ENCODE measurements at regions of chr1 and their contacts with region 1.

Region 1: GRCh38 chr1:25037174-25038074 is 107.3 kb upstream of the RUNX3 start:
- DNase-seq: no peak
- ATAC-seq: peak; percentile 33
- H3K4me3 ChIP-seq: no peak overlapping the region
- H3K27ac ChIP-seq: peak overlapping the region; percentile 69
- H3K4me1 ChIP-seq: peaks cover 51% of the 10 kb centered on the region
- H3K27me3 ChIP-seq: no peaks in the 10 kb centered on the region
- CTCF ChIP-seq: peak; percentile 67 to 90 (median 79)
- EP300 ChIP-seq: no peak
- POLR2A ChIP-seq: no peak
- RAD21 ChIP-seq: peak; percentile 74

Region 2: GRCh38 chr1:24606298-24607240 is 430.9 kb before region 1 on chr1:
- CTCF ChIA-PET with region 1: no interaction called
- POLR2A ChIA-PET with region 1: no interaction called
- RAD21 ChIA-PET with region 1: no interaction called
- SMC1A ChIA-PET with region 1: no interaction called
- in situ Hi-C with region 1: no loop called
- intact Hi-C with region 1: no loop called
- DNase-seq: no peak
- ATAC-seq: no peak
- H3K4me3 ChIP-seq: no peak overlapping the region
- H3K27ac ChIP-seq: no peak overlapping the region
- H3K4me1 ChIP-seq: no peaks in the 10 kb centered on the region
- H3K27me3 ChIP-seq: peaks cover 0 to 6% of the 10 kb centered on the region in 2 experiments; a peak in 2 of 4 replicates
- CTCF ChIP-seq: no peak
- EP300 ChIP-seq: no peak
- POLR2A ChIP-seq: no peak
- RAD21 ChIP-seq: no peak

Region 3: GRCh38 chr1:24619376-24619775 is 418.0 kb before region 1 on chr1:
- CTCF ChIA-PET with region 1: no interaction called
- POLR2A ChIA-PET with region 1: no interaction called
- RAD21 ChIA-PET with region 1: no interaction called
- SMC1A ChIA-PET with region 1: no interaction called
- in situ Hi-C with region 1: no loop called
- intact Hi-C with region 1: no loop called
- DNase-seq: no peak
- ATAC-seq: no peak
- H3K4me3 ChIP-seq: no peak overlapping the region
- H3K27ac ChIP-seq: no peak overlapping the region
- H3K4me1 ChIP-seq: no peaks in the 10 kb centered on the region
- H3K27me3 ChIP-seq: peaks cover 1 to 7% of the 10 kb centered on the region in 2 experiments; a peak in 2 of 4 replicates
- CTCF ChIP-seq: no peak
- EP300 ChIP-seq: no peak
- POLR2A ChIP-seq: no peak
- RAD21 ChIP-seq: no peak

Region 4: DNA sequence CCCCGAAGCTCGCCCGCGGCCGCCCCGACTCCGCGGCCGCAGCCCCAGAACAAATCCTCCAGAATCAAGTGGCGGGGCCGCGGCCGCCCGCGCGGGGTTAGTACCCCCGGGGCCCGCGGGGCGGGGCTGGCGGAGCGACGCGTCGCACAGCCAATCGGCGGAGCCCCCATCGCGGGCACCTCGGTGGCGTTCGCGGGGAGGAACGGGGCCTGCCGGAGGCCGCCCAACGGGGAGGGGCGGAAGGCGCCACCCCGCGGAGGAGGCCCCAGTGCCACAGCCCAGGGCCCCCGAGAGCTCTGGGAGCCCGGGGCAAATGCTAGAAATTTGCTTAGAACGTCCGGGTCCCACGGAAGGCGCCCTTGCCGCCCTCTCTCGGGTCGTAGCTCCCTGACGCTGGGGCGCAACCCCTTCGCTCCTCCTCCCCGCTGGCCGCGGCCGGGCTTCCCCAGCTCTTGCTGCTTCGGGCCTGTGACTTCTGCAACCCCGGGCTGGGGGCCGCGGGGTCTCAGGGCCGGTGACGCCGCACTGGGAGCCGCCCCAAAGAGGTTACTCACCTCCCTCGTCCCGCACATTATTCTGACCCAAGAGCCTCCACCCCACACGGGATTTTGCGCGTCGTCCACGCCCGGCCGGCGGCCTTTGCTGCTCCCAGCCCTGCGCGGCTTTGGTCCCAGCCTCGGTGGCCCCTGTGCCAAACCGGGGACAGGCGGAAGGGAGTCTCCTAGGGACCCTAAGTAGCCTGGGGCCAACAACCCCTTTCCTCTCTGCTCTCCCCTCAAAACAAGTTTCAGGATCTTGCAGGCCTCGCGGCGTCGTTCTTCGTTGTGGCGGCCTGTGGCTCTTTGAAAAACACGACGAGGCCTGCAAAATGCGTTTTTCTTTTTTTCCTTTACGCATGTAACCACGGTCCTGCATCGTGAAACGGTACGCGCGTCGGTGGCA is 106.9 kb before region 1 on chr1 and contains the start of gene RUNX3:
- CTCF ChIA-PET with region 1: interaction called, 128 read pairs
- POLR2A ChIA-PET with region 1: interaction called, 75 read pairs
- RAD21 ChIA-PET with region 1: interaction called, 150 read pairs
- SMC1A ChIA-PET with region 1: interaction called, 239 read pairs
- in situ Hi-C with region 1: no loop called
- intact Hi-C with region 1: loop called (anchors 1 kb)
- DNase-seq: peak; percentile 76
- ATAC-seq: peak; percentile 77
- H3K4me3 ChIP-seq: peak within 1 kb of the TSS; percentile 99
- H3K27ac ChIP-seq: peak within 1 kb of the TSS; percentile 89
- H3K4me1 ChIP-seq: peaks cover 40% of the 10 kb centered on the region
- H3K27me3 ChIP-seq: no peaks in the 10 kb centered on the region
- CTCF ChIP-seq: peak; percentile 14 to 45 (median 35); a peak in 3 of 6 replicates
- EP300 ChIP-seq: peak in 1 of 2 experiments; percentile 39; a peak in 1 of 4 replicates
- POLR2A ChIP-seq: peak; percentile 11; the same call in 1 of the 2 replicates
- RAD21 ChIP-seq: no peak
- polyA plus RNA-seq, gene RUNX3: 21.6 to 26.3 TPM

Region 5: DNA sequence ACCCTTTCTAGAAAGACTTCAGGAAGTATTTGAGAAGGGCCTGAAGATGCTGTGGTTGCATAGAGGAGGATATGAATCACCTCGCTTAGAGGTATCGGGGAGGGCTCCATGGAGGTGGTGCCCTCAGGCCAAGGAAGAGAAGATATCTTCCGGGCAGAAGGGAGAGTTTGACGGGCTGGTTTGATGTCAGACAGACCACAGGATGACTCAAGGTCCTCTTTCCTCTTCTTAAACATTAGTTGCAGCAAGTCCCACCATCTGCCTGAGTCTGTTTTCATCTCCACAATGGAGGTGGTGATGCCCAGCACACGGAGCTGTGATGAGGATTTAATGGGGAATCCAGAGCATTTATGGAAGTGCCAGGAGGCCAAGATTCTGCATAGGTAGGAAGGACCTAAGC is 82.3 kb before region 1 on chr1:
- CTCF ChIA-PET with region 1: interaction called, 396 read pairs
- POLR2A ChIA-PET with region 1: interaction called, 169 read pairs
- RAD21 ChIA-PET with region 1: interaction called, 214 read pairs
- SMC1A ChIA-PET with region 1: interaction called, 292 read pairs
- in situ Hi-C with region 1: loop called (anchors 5 kb)
- intact Hi-C with region 1: no loop called
- DNase-seq: no peak
- ATAC-seq: peak; percentile 57
- H3K4me3 ChIP-seq: peak overlapping the region; percentile 52
- H3K27ac ChIP-seq: peak overlapping the region; percentile 76
- H3K4me1 ChIP-seq: peaks cover 92% of the 10 kb centered on the region
- H3K27me3 ChIP-seq: no peaks in the 10 kb centered on the region
- CTCF ChIP-seq: no peak
- EP300 ChIP-seq: no peak
- POLR2A ChIP-seq: no peak; the same call in 1 of the 2 replicates
- RAD21 ChIP-seq: no peak

Region 6: DNA sequence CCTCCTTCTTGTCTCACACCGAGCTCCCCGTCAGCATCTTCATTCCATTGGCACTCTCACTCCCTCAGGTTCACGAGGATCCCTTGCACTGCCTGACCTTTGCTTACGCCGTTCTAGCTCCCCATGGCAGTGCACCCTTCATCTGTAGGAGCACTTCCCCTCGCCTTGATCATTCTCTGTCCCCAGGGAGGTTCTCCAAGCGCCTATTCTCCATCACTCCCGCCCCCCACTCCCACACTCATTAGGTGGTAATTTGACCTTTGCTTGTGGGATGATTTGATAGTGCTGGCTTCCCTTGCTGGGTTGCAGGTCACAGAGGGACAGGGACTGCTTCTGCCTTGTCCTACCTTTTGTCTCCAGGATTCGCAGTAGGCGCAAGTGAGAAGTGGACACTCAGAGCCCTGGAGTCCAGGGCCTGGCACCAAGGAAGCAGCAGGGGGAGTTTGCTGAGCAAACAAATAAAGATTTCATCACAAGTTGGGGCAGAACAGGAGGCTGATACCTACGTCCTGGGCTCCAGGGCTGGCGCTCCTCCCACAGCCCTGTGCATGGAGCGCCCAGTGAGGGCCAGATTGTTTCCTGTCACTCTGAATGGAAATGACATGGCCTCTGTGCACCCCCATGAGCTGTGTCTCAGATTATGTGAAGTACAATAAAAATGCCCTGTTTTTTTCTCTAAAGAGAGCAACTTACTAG is 25.3 kb before region 1 on chr1:
- CTCF ChIA-PET with region 1: interaction called, 3 read pairs
- POLR2A ChIA-PET with region 1: no interaction called
- RAD21 ChIA-PET with region 1: interaction called, 3 read pairs
- SMC1A ChIA-PET with region 1: interaction called, 13 read pairs
- in situ Hi-C with region 1: no loop called
- intact Hi-C with region 1: no loop called
- DNase-seq: no peak
- ATAC-seq: no peak
- H3K4me3 ChIP-seq: no peak overlapping the region
- H3K27ac ChIP-seq: no peak overlapping the region
- H3K4me1 ChIP-seq: peaks cover 3% of the 10 kb centered on the region; the same call in 1 of the 2 replicates
- H3K27me3 ChIP-seq: no peaks in the 10 kb centered on the region
- CTCF ChIP-seq: no peak
- EP300 ChIP-seq: no peak
- POLR2A ChIP-seq: no peak
- RAD21 ChIP-seq: no peak

Region 7: DNA sequence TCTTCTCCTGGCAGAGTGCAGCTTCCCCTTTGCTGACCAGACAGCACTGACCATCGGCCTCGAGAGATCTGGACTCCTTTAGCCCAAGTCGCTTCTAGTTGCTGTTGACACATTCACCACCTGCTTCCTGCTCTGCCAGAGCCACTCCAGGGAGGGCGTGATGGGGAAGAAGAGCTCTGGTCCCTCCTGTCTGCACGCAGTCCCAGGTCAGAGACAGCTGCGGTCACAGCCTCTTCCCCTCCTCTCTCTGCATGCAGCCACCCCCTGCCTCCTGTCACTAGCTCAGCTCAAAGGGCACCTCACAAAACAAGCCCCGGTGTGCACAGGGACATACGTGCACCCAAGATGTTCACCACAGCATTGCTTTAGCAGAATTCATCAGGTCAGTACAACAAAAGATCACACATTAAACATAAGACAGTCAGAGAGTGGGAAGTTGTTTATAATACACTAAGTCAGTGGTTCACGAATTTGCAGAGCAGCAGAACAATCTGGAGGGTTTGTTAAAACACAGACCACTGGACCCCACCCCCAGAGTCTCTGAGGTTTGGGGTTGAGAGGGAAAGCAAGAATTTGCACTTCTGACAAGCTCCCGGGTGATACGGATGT is 62.0 kb after region 1 on chr1:
- CTCF ChIA-PET with region 1: interaction called, 56 read pairs
- POLR2A ChIA-PET with region 1: interaction called, 5 read pairs
- RAD21 ChIA-PET with region 1: interaction called, 30 read pairs
- SMC1A ChIA-PET with region 1: interaction called, 61 read pairs
- in situ Hi-C with region 1: no loop called
- intact Hi-C with region 1: loop called (anchors 2 kb)
- DNase-seq: no peak
- ATAC-seq: peak; percentile 47
- H3K4me3 ChIP-seq: no peak overlapping the region
- H3K27ac ChIP-seq: no peak overlapping the region
- H3K4me1 ChIP-seq: peaks cover 55% of the 10 kb centered on the region
- H3K27me3 ChIP-seq: no peaks in the 10 kb centered on the region
- CTCF ChIP-seq: no peak
- EP300 ChIP-seq: 0 out of 4 replicates have a peak, but pooled peaks of 1 of the 2 experiments have one; percentile 10
- POLR2A ChIP-seq: no peak
- RAD21 ChIP-seq: no peak

Region 8: GRCh38 chr1:25204797-25205480 is 167.5 kb after region 1 on chr1:
- CTCF ChIA-PET with region 1: interaction called, 30 read pairs
- POLR2A ChIA-PET with region 1: no interaction called
- RAD21 ChIA-PET with region 1: interaction called, 8 read pairs
- SMC1A ChIA-PET with region 1: interaction called, 7 read pairs
- in situ Hi-C with region 1: no loop called
- intact Hi-C with region 1: loop called (anchors 10 kb)
- DNase-seq: no peak
- ATAC-seq: peak; percentile 77
- H3K4me3 ChIP-seq: no peak overlapping the region
- H3K27ac ChIP-seq: no peak overlapping the region
- H3K4me1 ChIP-seq: no peaks in the 10 kb centered on the region
- H3K27me3 ChIP-seq: peaks cover 0 to 3% of the 10 kb centered on the region in 2 experiments; a peak in 1 of 4 replicates
- CTCF ChIP-seq: peak; percentile 56 to 65 (median 64)
- EP300 ChIP-seq: no peak
- POLR2A ChIP-seq: no peak
- RAD21 ChIP-seq: peak; percentile 79